Kidney (tissue), 22 donors: ENCODE measurements at regions of chr13 and their contacts with region 1.

Region 1: DNA sequence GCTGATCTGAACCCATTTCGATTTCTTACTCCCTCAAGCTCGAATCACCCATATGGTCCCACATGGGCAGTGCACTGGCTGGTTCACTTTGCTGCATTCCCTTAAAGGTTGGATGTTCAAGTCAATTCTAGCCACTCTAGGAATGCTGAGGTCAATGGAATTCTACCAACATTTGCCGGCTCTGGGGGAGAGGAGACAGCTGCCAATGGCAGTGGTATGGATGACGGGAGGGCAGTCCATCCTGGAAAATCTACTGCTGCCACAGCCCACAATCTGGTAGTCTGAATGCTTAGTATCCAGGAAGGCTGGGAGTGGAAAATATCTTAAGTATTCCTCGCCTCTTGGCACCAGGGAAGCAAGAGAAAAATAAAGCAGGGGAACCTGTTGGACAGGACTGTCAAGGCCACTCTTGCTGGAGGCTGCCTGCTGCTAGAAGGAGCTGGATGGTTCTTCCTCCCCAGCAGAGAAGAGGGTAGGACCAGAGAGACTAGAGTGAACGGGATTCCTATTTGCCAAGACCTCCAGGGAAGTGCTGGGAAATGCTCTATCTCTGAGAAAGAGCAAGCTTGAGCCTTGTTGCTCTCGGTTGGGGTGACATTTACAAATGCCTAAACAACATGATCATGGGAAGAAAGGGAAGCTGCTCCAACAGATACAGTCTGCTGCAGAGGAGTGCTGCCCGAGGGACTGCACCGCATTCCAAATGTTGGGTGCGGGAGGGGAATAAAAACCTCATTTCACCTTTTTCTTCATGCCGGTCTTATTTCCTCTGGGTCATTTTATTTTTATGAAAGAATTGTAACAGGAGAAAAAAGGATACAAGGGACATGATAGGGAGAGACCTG is 20.7 kb upstream of the HMGB1 start:
- DNase-seq: peak in 3 of 5 donors; percentile 44 to 66 (median 54)
- H3K4me3 ChIP-seq: peak overlapping the region in 1 of 3 donors; percentile 9
- H3K27ac ChIP-seq: peak overlapping the region in 1 of 2 donors; percentile 15
- H3K4me1 ChIP-seq: no peaks in the 10 kb centered on the region
- H3K27me3 ChIP-seq: no peaks in the 10 kb centered on the region
- CTCF ChIP-seq: no peak

Region 2: GRCh38 chr13:30165796-30166195 is 320.7 kb before region 1 on chr13:
- intact Hi-C with region 1: no loop called
- DNase-seq: no peak
- H3K4me3 ChIP-seq: peak overlapping the region in 2 of 3 donors; percentile 36 to 51
- H3K27ac ChIP-seq: no peak overlapping the region
- H3K4me1 ChIP-seq: no peaks in the 10 kb centered on the region
- H3K27me3 ChIP-seq: no peaks in the 10 kb centered on the region
- CTCF ChIP-seq: no peak

Region 3: DNA sequence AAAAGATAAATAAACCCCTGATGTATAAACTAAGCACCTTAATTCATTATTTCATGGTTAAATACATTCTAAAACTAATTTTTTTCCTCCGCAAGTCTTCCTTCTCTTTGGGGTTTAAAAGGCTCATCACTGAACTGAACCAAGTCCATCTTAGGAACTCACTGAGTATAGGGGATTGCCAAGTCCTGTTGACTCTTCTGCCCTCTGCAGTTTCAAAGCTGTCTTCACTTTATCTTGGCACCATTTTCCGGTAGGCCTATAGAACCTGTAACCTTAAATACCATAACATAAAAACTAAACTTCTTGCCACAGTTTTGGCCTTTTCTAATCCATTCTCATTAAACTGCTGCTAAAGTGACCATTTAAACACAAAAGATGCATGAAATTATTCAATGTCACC is 64.7 kb after region 1 on chr13:
- intact Hi-C with region 1: loop called (anchors 10 kb)
- DNase-seq: peak in 1 of 5 donors; percentile 36
- H3K4me3 ChIP-seq: no peak overlapping the region
- H3K27ac ChIP-seq: no peak overlapping the region
- H3K4me1 ChIP-seq: no peaks in the 10 kb centered on the region
- H3K27me3 ChIP-seq: no peaks in the 10 kb centered on the region
- CTCF ChIP-seq: peak; percentile 35

Region 4: GRCh38 chr13:30572859-30573275 is 86.4 kb after region 1 on chr13:
- intact Hi-C with region 1: no loop called
- DNase-seq: peak in 2 of 5 donors; percentile 73 to 84
- H3K4me3 ChIP-seq: peak overlapping the region; percentile 26 to 62 (median 48)
- H3K27ac ChIP-seq: peak overlapping the region; percentile 8 to 43
- H3K4me1 ChIP-seq: peaks cover 0 to 2% (median 0%) of the 10 kb centered on the region in 3 donors
- H3K27me3 ChIP-seq: no peaks in the 10 kb centered on the region
- CTCF ChIP-seq: no peak

Region 5: DNA sequence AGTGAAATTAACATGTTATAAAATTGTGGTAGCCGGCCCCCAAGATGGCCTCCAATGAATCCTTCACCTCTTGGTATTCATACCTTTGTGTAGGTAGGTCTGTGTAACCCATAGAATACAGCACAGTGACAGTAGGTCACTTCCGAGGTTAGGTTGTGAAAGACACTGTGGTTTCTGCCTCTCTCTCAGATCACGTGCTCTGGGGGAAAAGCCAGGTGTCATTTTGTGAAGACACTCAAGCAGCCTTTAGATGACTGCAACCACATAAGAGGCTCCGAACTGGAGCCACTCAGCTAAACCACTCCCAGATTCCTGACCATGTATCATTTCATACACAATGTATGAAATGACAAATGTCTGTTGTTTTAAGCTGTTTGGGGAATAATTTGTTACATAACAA is 121.5 kb after region 1 on chr13:
- intact Hi-C with region 1: no loop called
- DNase-seq: no peak
- H3K4me3 ChIP-seq: no peak overlapping the region
- H3K27ac ChIP-seq: no peak overlapping the region
- H3K4me1 ChIP-seq: peaks cover 0 to 5% (median 0%) of the 10 kb centered on the region in 3 donors
- H3K27me3 ChIP-seq: no peaks in the 10 kb centered on the region
- CTCF ChIP-seq: no peak